ENCODE measurements at regions of chr17 and their contacts with region 1.

Region 1: DNA sequence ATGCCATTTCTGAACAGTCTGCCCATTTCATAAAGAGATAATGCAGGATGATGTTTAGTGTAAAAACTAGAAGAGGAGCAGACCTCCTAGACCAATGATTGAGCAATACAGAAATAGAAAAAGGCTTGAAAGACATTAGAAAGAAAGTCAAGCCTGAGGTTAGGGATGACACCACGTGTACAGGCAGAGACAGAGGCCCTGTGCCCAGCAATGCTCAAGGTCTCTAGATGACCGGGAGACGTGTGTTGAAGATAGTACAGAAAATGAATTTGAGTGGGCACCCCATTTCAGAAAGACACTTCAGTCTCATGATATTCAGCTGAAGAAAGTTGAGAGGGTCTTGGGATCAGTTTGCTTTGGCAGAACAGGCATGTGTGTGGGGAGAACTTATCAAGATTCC is 5.4 kb downstream of the GID4 start:
- DNase-seq: no peak
- ATAC-seq: no peak
- H3K4me3 Mint-ChIP-seq: no peak overlapping the region
- H3K27ac Mint-ChIP-seq: no peak overlapping the region
- H3K4me1 Mint-ChIP-seq: peaks cover 28% of the 10 kb centered on the region
- H3K27me3 Mint-ChIP-seq: no peaks in the 10 kb centered on the region

Region 2: DNA sequence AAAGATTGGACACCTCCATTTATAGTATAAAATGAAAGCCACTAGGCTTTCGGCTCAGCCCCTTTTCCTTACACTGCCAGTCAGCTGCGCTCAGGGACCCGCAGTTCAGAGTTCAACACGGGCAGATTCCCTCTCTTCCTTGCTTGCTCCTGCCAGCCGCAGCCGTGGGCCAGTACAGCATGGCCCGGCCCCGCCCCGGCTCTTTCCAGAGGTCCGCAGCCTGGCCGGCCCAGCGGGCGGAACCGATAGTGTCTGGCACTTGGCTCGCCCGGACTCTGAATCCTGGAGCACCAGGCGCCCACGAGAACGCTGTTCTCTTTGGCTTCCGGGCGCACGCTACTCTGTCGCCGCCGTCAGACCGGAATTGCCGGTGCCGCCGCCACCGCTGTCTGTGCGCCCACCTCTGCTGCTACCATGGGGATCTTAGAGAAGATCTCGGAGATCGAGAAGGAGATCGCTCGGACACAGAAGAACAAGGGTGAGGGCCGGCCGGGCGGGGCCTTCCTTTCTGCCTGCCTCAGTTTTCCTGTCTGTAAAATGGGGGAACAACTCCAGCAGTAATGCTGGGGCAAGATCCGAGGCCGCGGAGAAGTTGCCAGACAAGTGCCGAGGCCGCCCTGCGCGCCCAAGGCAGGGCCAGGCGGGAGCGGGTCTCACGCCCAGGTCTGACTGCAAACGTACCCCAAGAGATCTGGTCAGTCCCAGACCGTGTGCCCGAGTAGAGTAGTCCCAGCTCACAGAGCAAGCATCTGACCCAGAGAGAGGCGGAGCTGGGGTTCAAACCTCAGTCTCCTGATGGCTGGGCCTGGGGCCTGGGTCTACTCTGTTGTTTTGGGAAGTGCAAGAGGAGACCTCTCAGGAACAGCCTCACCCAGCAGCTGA is 43.2 kb after region 1 on chr17 and contains the start of gene DRG2:
- CTCF ChIA-PET with region 1: interaction called, 3 read pairs
- POLR2A ChIA-PET with region 1: no interaction called
- intact Hi-C with region 1: loop called (anchors 1 to 5 kb)
- DNase-seq: peak; percentile 93
- ATAC-seq: peak; percentile 90
- H3K4me3 Mint-ChIP-seq: peak within 1 kb of the TSS; percentile 99
- H3K27ac Mint-ChIP-seq: peak within 1 kb of the TSS; percentile 98
- H3K4me1 Mint-ChIP-seq: peaks cover 22% of the 10 kb centered on the region
- H3K27me3 Mint-ChIP-seq: no peaks in the 10 kb centered on the region
- total RNA-seq, gene DRG2: 42.5 to 45.6 TPM